A549 (cell line): ENCODE measurements at regions of chr4 and their contacts with region 1.

Region 1: DNA sequence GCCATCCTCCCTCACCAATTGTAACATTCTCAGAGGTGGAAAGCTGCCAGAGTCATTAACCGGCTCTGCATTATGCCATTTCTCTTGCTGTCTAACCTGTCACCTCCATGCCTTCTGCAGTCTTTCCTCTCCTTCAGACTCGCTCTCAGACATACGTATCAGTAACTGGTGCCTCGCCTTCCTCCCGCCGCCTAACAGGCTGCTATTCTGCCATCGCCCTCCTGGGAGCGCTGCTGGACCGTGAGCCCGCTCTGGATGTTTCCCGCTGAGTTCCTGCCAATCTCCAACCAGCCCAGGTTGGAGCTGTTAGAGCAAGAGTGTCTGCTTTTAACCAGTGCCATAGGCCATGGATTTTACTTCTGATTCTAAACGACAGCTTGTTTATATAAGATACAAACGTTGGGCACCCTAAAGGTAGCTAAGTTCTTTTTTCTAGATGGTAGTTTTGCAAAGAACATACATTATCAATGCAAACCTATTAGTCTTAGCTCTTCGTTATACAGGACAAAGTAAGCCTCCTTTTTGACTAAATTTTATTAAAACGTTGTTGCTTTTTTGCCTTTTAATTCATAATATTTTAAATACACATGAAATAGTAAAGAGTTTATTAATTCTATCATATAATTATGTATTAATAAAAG is 59.5 kb upstream of the NEIL3 start:
- DNase-seq: peak; percentile 38 to 71
- ATAC-seq: peak; percentile 94 to 99
- H3K4me3 ChIP-seq: no peak overlapping the region
- H3K27ac ChIP-seq: peak overlapping the region; percentile 36 to 61; a peak in 1 of 6 replicates
- H3K4me1 ChIP-seq: peaks cover 13% of the 10 kb centered on the region; the same call in 2 of the 3 replicates
- CTCF ChIP-seq: peak; percentile 79
- EP300 ChIP-seq: no peak
- POLR2A ChIP-seq: no peak
- RAD21 ChIP-seq: peak; percentile 94 to 96

Region 2: GRCh38 chr4:176833400-176834175 is 416.6 kb before region 1 on chr4:
- CTCF ChIA-PET with region 1: no interaction called
- POLR2A ChIA-PET with region 1: no interaction called
- DNase-seq: no peak
- ATAC-seq: no peak
- H3K4me3 ChIP-seq: no peak overlapping the region
- H3K27ac ChIP-seq: no peak overlapping the region
- H3K4me1 ChIP-seq: no peaks in the 10 kb centered on the region; the same call in 1 of the 3 replicates
- CTCF ChIP-seq: no peak
- EP300 ChIP-seq: no peak
- POLR2A ChIP-seq: no peak
- RAD21 ChIP-seq: no peak

Region 3: GRCh38 chr4:177266506-177266905 is 16.3 kb after region 1 on chr4:
- CTCF ChIA-PET with region 1: interaction called, 14 read pairs
- POLR2A ChIA-PET with region 1: no interaction called
- DNase-seq: no peak
- ATAC-seq: no peak
- H3K4me3 ChIP-seq: no peak overlapping the region
- H3K27ac ChIP-seq: no peak overlapping the region
- H3K4me1 ChIP-seq: peaks cover 11% of the 10 kb centered on the region; the same call in 2 of the 3 replicates
- CTCF ChIP-seq: no peak
- EP300 ChIP-seq: no peak
- POLR2A ChIP-seq: no peak
- RAD21 ChIP-seq: no peak

Region 4: DNA sequence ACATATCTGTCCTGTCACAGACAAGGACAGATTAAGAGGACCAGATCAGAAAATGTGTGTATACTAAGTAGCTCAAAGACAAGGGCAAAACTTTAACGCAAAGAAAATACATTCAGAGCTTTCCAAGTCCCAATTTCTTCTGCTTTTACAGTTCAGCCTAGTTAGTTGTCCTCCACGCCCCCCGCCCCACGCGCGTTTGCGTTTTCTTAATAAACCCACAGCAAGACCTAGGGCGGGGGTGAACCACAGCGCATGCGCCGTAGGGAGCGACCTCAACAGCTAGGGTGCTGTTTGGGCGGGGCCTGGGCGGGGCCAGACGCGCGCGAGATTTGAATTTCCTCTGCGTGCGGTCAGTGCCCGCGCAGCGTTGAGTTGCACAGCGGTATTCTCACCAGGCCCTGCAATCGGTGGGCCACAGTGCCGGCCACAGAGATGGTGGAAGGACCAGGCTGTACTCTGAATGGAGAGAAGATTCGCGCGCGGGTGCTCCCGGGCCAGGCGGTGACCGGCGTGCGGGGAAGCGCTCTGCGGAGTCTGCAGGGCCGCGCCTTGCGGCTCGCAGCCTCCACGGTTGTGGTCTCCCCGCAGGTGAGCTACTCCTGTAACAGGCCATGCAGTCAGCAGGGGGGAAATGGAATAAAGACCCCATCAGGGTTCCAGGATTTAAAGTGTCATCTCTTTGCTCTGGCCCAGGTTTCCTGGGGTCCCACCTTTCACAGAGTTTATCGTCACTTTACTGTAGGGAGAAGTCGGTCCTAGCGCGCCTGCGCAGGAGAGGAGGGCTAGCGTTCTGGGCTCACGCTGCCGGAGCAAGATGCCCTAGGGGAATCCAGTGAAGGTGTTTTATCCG is 59.6 kb after region 1 on chr4 and contains the start of gene NEIL3:
- CTCF ChIA-PET with region 1: interaction called, 14 read pairs
- POLR2A ChIA-PET with region 1: no interaction called
- DNase-seq: peak; percentile 70 to 91
- ATAC-seq: peak; percentile 91 to 92
- H3K4me3 ChIP-seq: peak within 1 kb of the TSS; percentile 58
- H3K27ac ChIP-seq: peak within 1 kb of the TSS; percentile 84 to 90
- H3K4me1 ChIP-seq: peaks cover 39% of the 10 kb centered on the region
- CTCF ChIP-seq: no peak
- EP300 ChIP-seq: no peak
- POLR2A ChIP-seq: no peak
- RAD21 ChIP-seq: no peak
- polyA plus RNA-seq, gene NEIL3: 29.1 and 42.0 TPM in 2 replicates

Region 5: GRCh38 chr4:177339477-177340374 is 89.5 kb after region 1 on chr4:
- CTCF ChIA-PET with region 1: interaction called, 53 read pairs
- POLR2A ChIA-PET with region 1: no interaction called
- DNase-seq: peak; percentile 7 to 26
- ATAC-seq: peak; percentile 70 to 89; a peak in 3 of 6 replicates
- H3K4me3 ChIP-seq: no peak overlapping the region
- H3K27ac ChIP-seq: peak overlapping the region; percentile 53 to 61
- H3K4me1 ChIP-seq: peaks cover 14% of the 10 kb centered on the region; the same call in 2 of the 3 replicates
- CTCF ChIP-seq: peak; percentile 68
- EP300 ChIP-seq: no peak
- POLR2A ChIP-seq: no peak
- RAD21 ChIP-seq: peak; percentile 65 to 80

Region 6: DNA sequence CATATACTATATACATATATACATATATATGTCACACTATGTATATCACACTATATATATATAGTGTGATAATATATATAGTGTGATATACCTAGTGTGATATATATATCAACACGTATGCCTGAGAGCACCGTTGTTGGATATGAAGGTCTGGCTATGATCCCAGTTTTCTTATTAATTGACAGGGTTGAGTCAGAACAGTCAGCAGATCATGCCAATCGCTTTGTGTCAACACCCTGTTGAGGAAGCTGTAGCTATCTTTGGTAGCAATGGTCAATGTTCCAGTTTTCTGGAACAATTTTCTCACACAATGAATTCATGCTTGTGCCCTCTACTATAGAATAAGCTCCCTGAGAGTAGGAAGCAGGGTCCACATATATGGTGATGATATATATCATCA is 688.0 kb after region 1 on chr4:
- CTCF ChIA-PET with region 1: no interaction called
- POLR2A ChIA-PET with region 1: no interaction called
- DNase-seq: no peak
- ATAC-seq: no peak
- H3K4me3 ChIP-seq: no peak overlapping the region
- H3K27ac ChIP-seq: no peak overlapping the region
- H3K4me1 ChIP-seq: no peaks in the 10 kb centered on the region
- CTCF ChIP-seq: no peak
- EP300 ChIP-seq: no peak
- POLR2A ChIP-seq: no peak
- RAD21 ChIP-seq: no peak